Stomach (tissue), 19 donors: ENCODE measurements at regions of chr10 and their contacts with region 1.

Region 1: DNA sequence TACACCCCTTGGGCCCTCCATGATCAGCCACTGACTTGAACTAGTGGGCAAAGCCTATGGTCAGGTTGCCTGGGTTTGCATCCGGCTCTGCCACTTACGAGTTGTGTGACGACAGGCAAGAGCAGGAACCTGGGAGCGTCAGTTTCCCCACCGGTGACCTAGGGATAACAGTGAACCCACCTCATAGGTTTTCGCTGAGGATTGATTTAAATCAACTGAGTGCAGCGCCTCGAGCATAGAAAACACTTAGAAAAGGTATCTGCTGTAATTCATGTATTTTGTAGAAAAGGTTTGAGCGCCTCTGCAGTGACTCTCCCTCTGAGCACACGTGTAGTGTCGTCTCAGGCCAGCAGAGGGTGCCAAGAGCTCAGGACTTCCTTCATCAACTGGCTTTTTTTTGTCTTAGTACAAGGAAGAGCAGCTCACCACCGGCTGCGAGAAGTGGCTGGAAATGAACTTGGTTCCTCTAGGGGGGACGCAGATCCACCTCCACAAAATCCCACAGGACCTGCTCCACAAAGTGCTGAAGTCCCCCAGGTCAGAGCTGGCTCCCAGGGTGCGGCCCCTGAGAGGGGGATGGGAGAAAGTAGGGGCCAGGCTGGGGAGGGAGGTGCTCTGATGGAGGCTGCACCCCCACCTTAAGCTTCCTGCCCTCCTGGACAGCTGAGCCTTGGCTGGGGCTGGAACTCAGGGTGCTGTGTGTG is 27.7 kb downstream of the BTBD16 start:
- DNase-seq: peak; percentile 72 to 93
- H3K4me3 ChIP-seq: peak overlapping the region in 2 of 4 donors; percentile 9 to 22
- H3K27ac ChIP-seq: no peak overlapping the region
- H3K4me1 ChIP-seq: peaks cover 0 to 15% (median 10%) of the 10 kb centered on the region in 4 donors
- H3K27me3 ChIP-seq: peaks cover 0 to 17% (median 0%) of the 10 kb centered on the region in 3 donors
- CTCF ChIP-seq: peak in 5 of 7 experiments; percentile 66 to 89 (median 88)
- EP300 ChIP-seq: no peak
- POLR2A ChIP-seq: no peak

Region 2: GRCh38 chr10:122172317-122173008 is 126.3 kb before region 1 on chr10:
- intact Hi-C with region 1: no loop called
- DNase-seq: peak in 1 of 2 donors; percentile 57
- H3K4me3 ChIP-seq: no peak overlapping the region
- H3K27ac ChIP-seq: peak overlapping the region in 1 of 5 donors; percentile 71
- H3K4me1 ChIP-seq: peaks cover 7 to 53% (median 28%) of the 10 kb centered on the region in 4 donors
- H3K27me3 ChIP-seq: no peaks in the 10 kb centered on the region
- CTCF ChIP-seq: no peak
- EP300 ChIP-seq: no peak
- POLR2A ChIP-seq: no peak

Region 3: DNA sequence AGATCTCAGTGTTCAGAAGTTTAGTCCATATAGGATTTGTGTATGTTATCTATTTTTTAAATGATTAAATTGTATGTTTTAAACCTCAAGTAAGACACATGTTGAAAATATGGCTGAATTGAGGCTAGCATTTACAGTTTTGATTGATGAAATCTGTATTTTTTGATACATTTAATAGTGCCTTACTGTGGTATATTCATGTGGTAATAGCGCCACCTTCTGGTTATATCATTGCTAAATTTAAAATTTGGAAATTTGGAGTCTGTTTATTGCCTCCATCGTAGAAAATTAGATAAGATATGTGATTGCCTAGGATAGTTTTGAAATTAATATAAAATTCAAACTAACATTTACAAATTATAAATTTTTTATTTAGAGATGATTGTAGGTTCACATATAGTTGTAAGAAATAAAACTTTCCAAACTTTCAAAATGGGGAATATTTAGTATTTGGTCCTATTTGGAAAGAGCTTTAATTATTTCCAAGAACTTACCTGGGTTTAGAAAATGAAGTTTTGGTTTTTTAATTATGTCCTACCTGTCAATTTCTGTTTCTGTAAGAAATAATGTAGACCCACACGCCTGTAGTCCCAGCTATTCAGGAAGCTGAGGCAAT is 136.6 kb after region 1 on chr10:
- intact Hi-C with region 1: loop called (anchors 5 kb)
- DNase-seq: peak in 1 of 2 donors; percentile 65
- H3K4me3 ChIP-seq: no peak overlapping the region
- H3K27ac ChIP-seq: no peak overlapping the region
- H3K4me1 ChIP-seq: no peaks in the 10 kb centered on the region
- H3K27me3 ChIP-seq: no peaks in the 10 kb centered on the region
- CTCF ChIP-seq: peak in 5 of 7 experiments; percentile 27 to 80 (median 62)
- EP300 ChIP-seq: no peak
- POLR2A ChIP-seq: no peak

Region 4: GRCh38 chr10:122565728-122566206 is 267.0 kb after region 1 on chr10:
- intact Hi-C with region 1: loop called (anchors 5 kb)
- DNase-seq: peak; percentile 78 to 93
- H3K4me3 ChIP-seq: peak overlapping the region in 3 of 4 donors; percentile 10 to 23 (median 22)
- H3K27ac ChIP-seq: no peak overlapping the region
- H3K4me1 ChIP-seq: peaks cover 0 to 8% (median 6%) of the 10 kb centered on the region in 4 donors
- H3K27me3 ChIP-seq: peaks cover 0 to 38% (median 6%) of the 10 kb centered on the region in 3 donors
- CTCF ChIP-seq: peak in 5 of 7 experiments; percentile 62 to 79 (median 68)
- EP300 ChIP-seq: no peak
- POLR2A ChIP-seq: no peak

Region 5: DNA sequence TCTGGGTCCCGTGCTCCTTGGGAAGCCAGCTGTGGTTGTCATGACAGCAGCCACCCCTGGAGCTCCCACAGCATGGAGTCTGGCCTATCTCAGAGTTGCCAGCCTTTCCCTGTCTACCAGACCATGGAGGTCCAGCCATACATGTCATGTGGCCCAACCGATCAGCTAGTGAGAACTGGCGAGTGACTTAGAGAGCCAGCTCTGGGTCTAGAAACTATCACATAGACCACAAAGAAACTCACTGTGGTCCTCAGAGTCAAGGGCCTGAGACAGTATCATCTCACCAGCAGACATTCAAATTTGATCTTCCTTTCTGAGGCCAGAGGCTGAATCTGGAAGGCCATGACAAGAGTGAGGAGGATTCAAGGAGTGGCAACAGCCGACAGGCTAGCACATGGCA is 1144.2 kb after region 1 on chr10:
- intact Hi-C with region 1: no loop called
- DNase-seq: no peak
- H3K4me3 ChIP-seq: no peak overlapping the region
- H3K27ac ChIP-seq: no peak overlapping the region
- H3K4me1 ChIP-seq: no peaks in the 10 kb centered on the region
- H3K27me3 ChIP-seq: peaks cover 0 to 8% (median 0%) of the 10 kb centered on the region in 3 donors
- CTCF ChIP-seq: no peak
- EP300 ChIP-seq: no peak
- POLR2A ChIP-seq: no peak

Region 6: DNA sequence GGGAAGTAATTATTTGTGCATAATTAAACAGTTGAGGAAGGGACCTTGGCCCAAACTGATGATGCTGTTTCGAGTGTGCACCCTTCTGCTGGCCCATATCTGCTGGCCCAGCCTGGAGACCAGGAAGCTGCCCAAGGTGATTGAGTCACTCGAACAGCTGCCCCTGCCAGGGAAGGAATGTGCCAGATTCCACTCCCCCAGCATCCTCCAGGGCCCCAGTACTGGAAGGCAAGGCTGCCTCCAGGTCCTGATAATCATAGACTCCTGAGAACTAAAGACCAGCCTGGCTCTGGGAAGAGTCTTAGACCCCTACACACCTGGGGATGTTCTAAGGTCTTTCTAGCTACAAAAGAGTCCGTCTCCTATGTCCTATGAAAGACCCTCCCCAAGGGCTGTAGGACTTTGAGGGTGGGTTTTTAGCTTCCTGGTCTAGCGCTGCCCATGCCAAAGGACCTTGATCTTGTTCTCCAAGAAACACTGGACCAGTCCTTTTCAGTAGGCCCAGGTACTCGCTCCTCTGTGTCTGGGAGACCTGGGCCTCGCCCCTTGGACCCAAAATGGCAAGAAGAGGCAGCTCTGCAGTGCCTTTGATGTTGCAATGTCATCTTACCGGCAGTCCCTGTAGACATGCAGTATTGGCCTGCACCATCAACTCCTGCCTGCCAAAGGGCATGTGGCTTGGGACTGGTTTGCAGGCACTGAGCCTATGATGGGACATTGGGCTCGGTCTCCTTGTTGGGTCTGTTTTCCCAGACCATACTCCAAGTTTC is 1264.2 kb after region 1 on chr10:
- intact Hi-C with region 1: loop called (anchors 10 kb)
- DNase-seq: no peak
- H3K4me3 ChIP-seq: no peak overlapping the region
- H3K27ac ChIP-seq: no peak overlapping the region
- H3K4me1 ChIP-seq: peaks cover 0 to 5% (median 0%) of the 10 kb centered on the region in 4 donors
- H3K27me3 ChIP-seq: peaks cover 0 to 53% (median 0%) of the 10 kb centered on the region in 3 donors
- CTCF ChIP-seq: no peak
- EP300 ChIP-seq: no peak
- POLR2A ChIP-seq: no peak